Activated CD8-positive, alpha-beta memory T cell treated with anti-CD3 and anti-CD28 coated beads, Interleukin-2, amount 10 ng/mL, durations not matched to agents 7 days and 5 days (primary cell): ENCODE measurements at regions of chr10 and their contacts with region 1.

Region 1: GRCh38 chr10:6088721-6089390 is at the start of gene RBM17:
- DNase-seq: peak; percentile 98
- ATAC-seq: peak; percentile 84
- H3K4me3 Mint-ChIP-seq: peak within 1 kb of the TSS; percentile 87
- H3K27ac Mint-ChIP-seq: peak within 1 kb of the TSS; percentile 85
- H3K4me1 Mint-ChIP-seq: peaks cover 70% of the 10 kb centered on the region
- H3K27me3 Mint-ChIP-seq: no peaks in the 10 kb centered on the region
- total RNA-seq, gene RBM17: 205 to 267 TPM

Region 2: DNA sequence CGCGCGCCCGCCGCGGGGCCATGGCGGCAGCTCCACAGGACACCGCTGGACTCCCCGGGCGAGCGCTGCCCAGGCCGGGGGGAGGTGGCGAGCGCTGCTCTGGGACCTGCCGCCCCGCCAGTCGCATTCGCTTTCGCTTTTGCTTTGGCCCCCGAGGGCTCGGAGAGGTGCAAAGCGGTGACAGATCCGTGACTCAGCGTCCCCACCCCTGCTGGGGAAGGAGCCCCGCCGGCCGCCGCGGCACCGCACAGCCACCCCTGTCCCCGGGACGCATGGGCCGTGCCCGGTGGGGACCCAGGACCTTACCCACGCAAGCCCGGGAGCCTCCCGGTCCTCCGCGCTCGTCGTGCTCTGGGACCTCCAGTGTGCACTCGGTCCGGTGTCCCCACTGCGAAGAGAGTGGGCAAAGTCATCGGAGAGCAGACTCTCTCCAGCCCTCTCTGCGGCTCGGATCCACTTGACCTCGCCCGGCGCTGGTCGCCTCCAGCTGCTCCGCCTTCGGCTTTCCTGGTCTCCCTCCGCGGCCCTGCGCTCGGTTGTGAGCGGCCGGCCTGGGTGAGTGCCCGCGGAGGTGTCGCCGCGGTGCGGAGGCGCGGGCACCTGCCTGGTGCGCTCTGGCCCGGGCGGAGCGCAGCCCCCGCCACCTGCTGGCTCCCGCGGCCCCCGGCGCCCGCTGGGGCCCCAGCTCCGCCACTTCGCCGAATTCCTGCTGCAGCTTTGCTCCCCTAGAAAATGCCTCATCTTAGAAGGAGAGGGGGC is 111.2 kb before region 1 on chr10 and contains the start of gene IL15RA:
- CTCF ChIA-PET with region 1: interaction called, 25 read pairs
- DNase-seq: peak; percentile 95
- ATAC-seq: peak; percentile 86
- H3K4me3 Mint-ChIP-seq: peak within 1 kb of the TSS; percentile 87
- H3K27ac Mint-ChIP-seq: peak within 1 kb of the TSS; percentile 98
- H3K4me1 Mint-ChIP-seq: peaks cover 35% of the 10 kb centered on the region
- H3K27me3 Mint-ChIP-seq: no peaks in the 10 kb centered on the region
- total RNA-seq, gene IL15RA: 31.1 to 31.7 TPM

Region 3: GRCh38 chr10:6014241-6014761 is 74.6 kb before region 1 on chr10:
- CTCF ChIA-PET with region 1: interaction called, 41 read pairs
- DNase-seq: peak; percentile 73
- ATAC-seq: peak; percentile 80
- H3K4me3 Mint-ChIP-seq: no peak overlapping the region
- H3K27ac Mint-ChIP-seq: peak overlapping the region; percentile 81
- H3K4me1 Mint-ChIP-seq: peaks cover 52% of the 10 kb centered on the region
- H3K27me3 Mint-ChIP-seq: no peaks in the 10 kb centered on the region

Region 4: DNA sequence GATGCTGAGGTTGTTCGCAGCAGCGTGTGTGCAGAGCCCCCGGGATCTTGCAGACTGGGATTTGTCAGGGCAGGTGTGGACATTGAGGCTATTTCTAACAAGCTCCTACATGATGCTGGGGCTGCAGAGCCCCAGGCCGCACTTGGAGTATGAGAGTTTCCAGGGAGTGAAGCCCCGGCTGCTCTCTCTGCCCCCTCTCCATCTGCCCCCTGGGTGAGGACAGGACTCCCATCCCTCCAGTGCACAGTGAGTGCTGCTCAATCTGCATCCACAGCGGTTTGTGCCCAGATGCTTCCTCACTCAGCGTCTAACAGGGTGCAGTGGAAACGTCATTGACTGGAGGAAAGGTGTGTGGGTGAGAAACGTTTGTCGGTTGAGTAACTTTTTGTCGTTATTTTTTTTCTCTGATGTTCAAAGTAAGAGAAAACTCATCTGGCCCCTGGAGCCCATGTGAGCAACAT is 52.0 kb before region 1 on chr10:
- CTCF ChIA-PET with region 1: interaction called, 16 read pairs
- DNase-seq: no peak
- ATAC-seq: no peak
- H3K4me3 Mint-ChIP-seq: no peak overlapping the region
- H3K27ac Mint-ChIP-seq: peak overlapping the region; percentile 83
- H3K4me1 Mint-ChIP-seq: peaks cover 83% of the 10 kb centered on the region
- H3K27me3 Mint-ChIP-seq: no peaks in the 10 kb centered on the region

Region 5: GRCh38 chr10:6050801-6051445 is 37.9 kb before region 1 on chr10:
- CTCF ChIA-PET with region 1: interaction called, 51 read pairs
- DNase-seq: peak; percentile 97
- ATAC-seq: peak; percentile 67
- H3K4me3 Mint-ChIP-seq: peak overlapping the region; percentile 76
- H3K27ac Mint-ChIP-seq: peak overlapping the region; percentile 88
- H3K4me1 Mint-ChIP-seq: peaks cover 86% of the 10 kb centered on the region
- H3K27me3 Mint-ChIP-seq: no peaks in the 10 kb centered on the region

Region 6: GRCh38 chr10:6062101-6062771 is 26.6 kb before region 1 on chr10 and contains the start of gene IL2RA:
- CTCF ChIA-PET with region 1: interaction called, 246 read pairs
- DNase-seq: peak; percentile 84
- ATAC-seq: peak; percentile 71
- H3K4me3 Mint-ChIP-seq: peak within 1 kb of the TSS; percentile 88
- H3K27ac Mint-ChIP-seq: peak within 1 kb of the TSS; percentile 88
- H3K4me1 Mint-ChIP-seq: peaks cover 68% of the 10 kb centered on the region
- H3K27me3 Mint-ChIP-seq: no peaks in the 10 kb centered on the region
- total RNA-seq, gene IL2RA: 302 to 832 TPM

Region 7: GRCh38 chr10:6068422-6068821 is 20.4 kb before region 1 on chr10:
- CTCF ChIA-PET with region 1: interaction called, 246 read pairs
- DNase-seq: no peak
- ATAC-seq: peak; percentile 5
- H3K4me3 Mint-ChIP-seq: peak overlapping the region; percentile 32
- H3K27ac Mint-ChIP-seq: peak overlapping the region; percentile 96
- H3K4me1 Mint-ChIP-seq: peaks cover 94% of the 10 kb centered on the region
- H3K27me3 Mint-ChIP-seq: no peaks in the 10 kb centered on the region

Region 8: GRCh38 chr10:6191147-6191546 is 102.3 kb after region 1 on chr10:
- CTCF ChIA-PET with region 1: no interaction called
- DNase-seq: no peak
- ATAC-seq: no peak
- H3K4me3 Mint-ChIP-seq: no peak overlapping the region
- H3K27ac Mint-ChIP-seq: no peak overlapping the region
- H3K4me1 Mint-ChIP-seq: peaks cover 26% of the 10 kb centered on the region
- H3K27me3 Mint-ChIP-seq: no peaks in the 10 kb centered on the region